Naive thymus-derived CD4-positive, alpha-beta T cell (primary cell): ENCODE measurements at regions of chr10 and their contacts with region 1.

Region 1: GRCh38 chr10:95656291-95657164 is at the start of gene ALDH18A1:
- DNase-seq: peak; percentile 78 to 95 (median 88)
- ATAC-seq: peak; percentile 95
- H3K4me3 ChIP-seq: peak within 1 kb of the TSS; percentile 78
- H3K4me3 Mint-ChIP-seq: peak within 1 kb of the TSS; percentile 98 to 100 (median 99)
- H3K27ac ChIP-seq: peak within 1 kb of the TSS; percentile 72
- H3K27ac Mint-ChIP-seq: peak within 1 kb of the TSS; percentile 82 to 97 (median 93)
- H3K4me1 ChIP-seq: peaks cover 7 to 13% of the 10 kb centered on the region in 2 donors
- H3K4me1 Mint-ChIP-seq: peaks cover 7 to 40% (median 27%) of the 10 kb centered on the region in 7 donors
- H3K27me3 ChIP-seq: no peaks in the 10 kb centered on the region
- H3K27me3 Mint-ChIP-seq: peaks cover 0 to 3% (median 0%) of the 10 kb centered on the region in 5 donors
- total RNA-seq, gene ALDH18A1: 15.0 to 73.8 (median 26.0) TPM

Region 2: GRCh38 chr10:95561182-95562075 is 95.1 kb before region 1 on chr10 and contains the start of gene SORBS1:
- CTCF ChIA-PET with region 1: no interaction called
- POLR2A ChIA-PET with region 1: no interaction called
- intact Hi-C with region 1: loop called (anchors 1 kb)
- DNase-seq: peak; percentile 80 to 88 (median 82)
- ATAC-seq: peak; percentile 99
- H3K4me3 ChIP-seq: peak within 1 kb of the TSS; percentile 90
- H3K4me3 Mint-ChIP-seq: peak within 1 kb of the TSS; percentile 96 to 100 (median 99)
- H3K27ac ChIP-seq: peak within 1 kb of the TSS; percentile 66
- H3K27ac Mint-ChIP-seq: peak within 1 kb of the TSS; percentile 76 to 97 (median 89)
- H3K4me1 ChIP-seq: peaks cover 4% of the 10 kb centered on the region in 2 donors
- H3K4me1 Mint-ChIP-seq: peaks cover 7 to 16% (median 11%) of the 10 kb centered on the region in 7 donors
- H3K27me3 ChIP-seq: no peaks in the 10 kb centered on the region
- H3K27me3 Mint-ChIP-seq: peaks cover 0 to 63% (median 5%) of the 10 kb centered on the region in 5 donors
- total RNA-seq, gene SORBS1: 0.58 to 1.9 (median 1.4) TPM

Region 3: GRCh38 chr10:95783741-95784140 is 127.2 kb after region 1 on chr10:
- CTCF ChIA-PET with region 1: no interaction called
- POLR2A ChIA-PET with region 1: no interaction called
- intact Hi-C with region 1: no loop called
- DNase-seq: no peak
- ATAC-seq: peak; percentile 24
- H3K4me3 ChIP-seq: no peak overlapping the region
- H3K4me3 Mint-ChIP-seq: no peak overlapping the region
- H3K27ac ChIP-seq: no peak overlapping the region
- H3K27ac Mint-ChIP-seq: peak overlapping the region in 1 of 9 donors; percentile 88
- H3K4me1 ChIP-seq: no peaks in the 10 kb centered on the region
- H3K4me1 Mint-ChIP-seq: peaks cover 0 to 52% (median 0%) of the 10 kb centered on the region in 7 donors
- H3K27me3 ChIP-seq: peaks cover 0 to 6% of the 10 kb centered on the region in 2 donors
- H3K27me3 Mint-ChIP-seq: peaks cover 11 to 30% (median 20%) of the 10 kb centered on the region in 5 donors

Region 4: DNA sequence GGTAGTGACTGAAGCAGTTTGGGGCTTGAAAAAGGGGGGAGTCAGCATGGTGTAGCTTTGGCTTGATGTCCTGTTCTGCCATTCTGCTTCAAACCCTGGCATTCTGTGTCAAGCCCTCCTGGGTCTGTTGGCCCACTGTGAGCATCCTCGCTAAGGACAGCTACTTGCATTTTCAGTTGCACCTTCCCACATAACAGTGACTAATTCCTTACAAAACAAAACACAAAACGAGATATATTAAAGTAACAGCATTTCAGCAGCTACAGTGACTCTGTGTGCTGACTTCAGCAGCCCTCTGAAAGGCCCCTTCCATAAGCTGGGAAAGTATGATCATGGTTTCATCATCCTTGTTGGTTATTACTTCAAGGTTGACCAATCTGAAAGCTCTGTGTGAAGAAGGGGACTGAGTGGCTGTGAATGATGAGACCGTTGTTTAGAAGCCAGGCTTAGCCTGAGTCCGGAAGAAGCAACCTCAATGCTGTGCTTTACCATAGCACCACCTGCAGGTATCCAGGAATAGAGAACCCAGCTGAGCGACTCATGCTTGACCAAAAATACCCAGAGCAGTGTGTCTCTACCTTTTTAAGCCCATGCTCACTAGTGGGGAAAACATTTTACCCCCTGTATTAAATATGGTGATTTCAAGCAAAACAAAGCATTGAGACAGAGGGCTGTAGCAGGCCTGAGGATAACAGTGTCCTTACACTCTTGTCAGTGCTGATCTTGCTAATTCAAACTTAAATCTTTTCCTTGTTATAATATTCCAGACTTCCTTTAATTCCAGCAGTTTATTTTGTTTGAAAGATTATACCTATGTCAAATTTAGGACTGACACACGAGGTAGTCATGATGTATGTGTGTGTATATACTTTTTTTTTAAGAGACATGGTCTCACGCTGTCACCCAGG is 208.6 kb after region 1 on chr10:
- CTCF ChIA-PET with region 1: no interaction called
- POLR2A ChIA-PET with region 1: no interaction called
- intact Hi-C with region 1: loop called in 1 of 2 experiments (anchors 1 kb)
- DNase-seq: peak in 7 of 9 donors; percentile 10 to 40 (median 24)
- ATAC-seq: peak; percentile 88
- H3K4me3 ChIP-seq: no peak overlapping the region
- H3K4me3 Mint-ChIP-seq: peak overlapping the region in 1 of 10 donors; percentile 24
- H3K27ac ChIP-seq: no peak overlapping the region
- H3K27ac Mint-ChIP-seq: peak overlapping the region in 1 of 9 donors; percentile 83
- H3K4me1 ChIP-seq: no peaks in the 10 kb centered on the region
- H3K4me1 Mint-ChIP-seq: peaks cover 0 to 37% (median 0%) of the 10 kb centered on the region in 7 donors
- H3K27me3 ChIP-seq: no peaks in the 10 kb centered on the region
- H3K27me3 Mint-ChIP-seq: peaks cover 0 to 3% (median 0%) of the 10 kb centered on the region in 5 donors

Region 5: DNA sequence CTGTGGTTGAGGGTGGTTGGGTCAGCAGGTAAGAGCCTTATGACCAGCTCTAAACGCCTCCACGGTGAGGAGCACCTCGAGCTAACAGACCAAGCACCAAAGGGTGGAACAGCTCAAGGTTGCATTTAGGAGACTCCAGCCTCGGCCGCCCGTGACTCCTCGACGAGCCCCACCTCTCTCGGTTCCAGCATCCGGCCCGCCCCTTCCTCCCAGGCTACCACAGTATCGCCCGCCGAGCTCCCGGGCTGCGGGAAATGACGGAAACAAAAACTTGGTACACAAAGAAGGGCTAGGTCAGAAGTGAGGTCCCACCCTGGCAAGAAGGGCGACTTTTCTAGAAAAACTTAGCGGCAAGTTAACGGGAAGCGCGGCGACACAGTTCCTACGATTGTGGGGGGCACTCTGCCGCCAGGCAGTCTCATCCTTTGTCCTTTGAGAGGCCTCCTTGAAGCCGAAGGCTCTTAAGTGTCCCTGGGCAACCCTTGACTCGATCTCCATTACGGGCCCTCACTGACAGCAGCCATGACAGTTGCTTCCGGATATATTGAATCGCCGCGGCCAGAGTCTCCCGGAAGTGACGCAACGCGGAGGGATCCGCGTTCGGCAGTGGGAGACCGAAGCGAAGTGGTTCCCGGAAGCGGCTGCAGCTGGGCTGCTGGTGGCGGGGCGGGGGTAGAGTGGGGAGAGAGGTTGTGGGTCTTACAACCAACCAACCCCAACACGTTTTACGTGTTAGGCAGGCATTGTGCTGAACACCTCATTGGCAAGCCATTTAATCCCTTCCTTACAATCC is 433.3 kb after region 1 on chr10:
- CTCF ChIA-PET with region 1: no interaction called
- POLR2A ChIA-PET with region 1: no interaction called
- intact Hi-C with region 1: loop called in 1 of 2 experiments (anchors 1 kb)
- DNase-seq: peak; percentile 87 to 94 (median 92)
- ATAC-seq: peak; percentile 94
- H3K4me3 ChIP-seq: peak overlapping the region; percentile 99
- H3K4me3 Mint-ChIP-seq: peak overlapping the region; percentile 87 to 98 (median 94)
- H3K27ac ChIP-seq: peak overlapping the region; percentile 93
- H3K27ac Mint-ChIP-seq: peak overlapping the region; percentile 96 to 99 (median 99)
- H3K4me1 ChIP-seq: peaks cover 4 to 8% of the 10 kb centered on the region in 2 donors
- H3K4me1 Mint-ChIP-seq: peaks cover 0 to 15% (median 14%) of the 10 kb centered on the region in 7 donors
- H3K27me3 ChIP-seq: peaks cover 3 to 4% of the 10 kb centered on the region in 2 donors
- H3K27me3 Mint-ChIP-seq: peaks cover 29 to 36% (median 30%) of the 10 kb centered on the region in 5 donors